Colonic mucosa (tissue), 4 donors: ENCODE measurements at regions of chr1 and their contacts with region 1.

Region 1: GRCh38 chr1:208093754-208094719 is 150.1 kb downstream of the PLXNA2 start:
- DNase-seq: peak; percentile 74
- H3K4me3 ChIP-seq: no peak overlapping the region
- H3K27ac ChIP-seq: no peak overlapping the region
- H3K4me1 ChIP-seq: no peaks in the 10 kb centered on the region
- H3K27me3 ChIP-seq: no peaks in the 10 kb centered on the region
- CTCF ChIP-seq: peak; percentile 66

Region 2: DNA sequence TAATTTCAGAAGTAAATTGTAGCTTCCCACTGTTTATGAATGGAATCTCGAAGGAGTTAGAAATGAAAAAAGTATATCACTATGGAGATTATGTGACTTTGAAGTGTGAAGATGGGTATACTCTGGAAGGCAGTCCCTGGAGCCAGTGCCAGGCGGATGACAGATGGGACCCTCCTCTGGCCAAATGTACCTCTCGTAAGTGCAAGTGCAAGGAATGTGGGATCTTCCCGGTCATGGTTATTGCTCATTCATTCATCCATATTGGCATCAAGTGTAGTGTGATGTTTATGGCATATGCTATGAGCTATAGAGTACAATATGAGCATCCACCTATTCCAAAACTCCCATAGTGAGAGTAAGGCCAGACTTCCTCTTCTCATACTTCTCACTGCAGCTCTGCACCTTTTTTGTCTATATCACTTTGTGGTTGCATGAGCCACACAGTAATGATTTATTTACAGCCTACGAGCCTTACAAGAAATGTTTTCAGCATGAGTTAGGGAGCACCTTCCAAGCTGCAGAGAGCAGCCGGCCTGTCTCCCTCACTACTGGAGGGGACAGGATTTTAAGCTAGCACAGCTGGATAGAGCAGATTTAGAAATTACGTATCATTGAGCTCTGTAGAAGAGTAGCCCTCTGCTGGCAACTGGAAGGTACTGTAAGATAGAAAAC is 474.0 kb before region 1 on chr1:
- intact Hi-C with region 1: no loop called
- DNase-seq: no peak
- H3K4me3 ChIP-seq: no peak overlapping the region
- H3K27ac ChIP-seq: no peak overlapping the region
- H3K4me1 ChIP-seq: no peaks in the 10 kb centered on the region
- H3K27me3 ChIP-seq: no peaks in the 10 kb centered on the region
- CTCF ChIP-seq: peak; percentile 50

Region 3: GRCh38 chr1:208025031-208025430 is 69.0 kb before region 1 on chr1:
- intact Hi-C with region 1: loop called (anchors 5 kb)
- DNase-seq: no peak
- H3K4me3 ChIP-seq: no peak overlapping the region
- H3K27ac ChIP-seq: no peak overlapping the region
- H3K4me1 ChIP-seq: peaks cover 7% of the 10 kb centered on the region
- H3K27me3 ChIP-seq: no peaks in the 10 kb centered on the region
- CTCF ChIP-seq: no peak

Region 4: DNA sequence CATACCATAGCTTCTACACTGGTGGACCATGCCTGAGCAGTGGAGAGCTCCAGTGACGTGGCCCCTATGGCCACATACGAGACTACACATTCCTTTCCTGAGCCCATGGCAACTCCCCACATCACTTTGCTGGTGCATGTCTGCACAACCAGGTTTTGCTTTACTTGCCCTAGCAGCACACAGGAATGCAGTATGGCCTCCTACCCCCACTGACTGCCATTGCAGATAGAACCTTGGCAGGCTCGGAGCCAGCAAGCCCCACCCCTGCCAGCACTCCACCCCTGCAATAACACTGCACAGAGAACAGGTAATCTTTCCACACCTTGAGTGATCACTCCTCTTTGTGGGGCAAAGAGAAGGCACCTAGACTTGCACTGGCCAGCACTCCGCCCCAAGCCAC is 957.5 kb after region 1 on chr1:
- intact Hi-C with region 1: no loop called
- DNase-seq: peak; percentile 61
- H3K4me3 ChIP-seq: no peak overlapping the region
- H3K27ac ChIP-seq: no peak overlapping the region
- H3K4me1 ChIP-seq: no peaks in the 10 kb centered on the region
- H3K27me3 ChIP-seq: no peaks in the 10 kb centered on the region
- CTCF ChIP-seq: no peak